ENCODE measurements at regions of chr22 and their contacts with region 1.

Region 1: DNA sequence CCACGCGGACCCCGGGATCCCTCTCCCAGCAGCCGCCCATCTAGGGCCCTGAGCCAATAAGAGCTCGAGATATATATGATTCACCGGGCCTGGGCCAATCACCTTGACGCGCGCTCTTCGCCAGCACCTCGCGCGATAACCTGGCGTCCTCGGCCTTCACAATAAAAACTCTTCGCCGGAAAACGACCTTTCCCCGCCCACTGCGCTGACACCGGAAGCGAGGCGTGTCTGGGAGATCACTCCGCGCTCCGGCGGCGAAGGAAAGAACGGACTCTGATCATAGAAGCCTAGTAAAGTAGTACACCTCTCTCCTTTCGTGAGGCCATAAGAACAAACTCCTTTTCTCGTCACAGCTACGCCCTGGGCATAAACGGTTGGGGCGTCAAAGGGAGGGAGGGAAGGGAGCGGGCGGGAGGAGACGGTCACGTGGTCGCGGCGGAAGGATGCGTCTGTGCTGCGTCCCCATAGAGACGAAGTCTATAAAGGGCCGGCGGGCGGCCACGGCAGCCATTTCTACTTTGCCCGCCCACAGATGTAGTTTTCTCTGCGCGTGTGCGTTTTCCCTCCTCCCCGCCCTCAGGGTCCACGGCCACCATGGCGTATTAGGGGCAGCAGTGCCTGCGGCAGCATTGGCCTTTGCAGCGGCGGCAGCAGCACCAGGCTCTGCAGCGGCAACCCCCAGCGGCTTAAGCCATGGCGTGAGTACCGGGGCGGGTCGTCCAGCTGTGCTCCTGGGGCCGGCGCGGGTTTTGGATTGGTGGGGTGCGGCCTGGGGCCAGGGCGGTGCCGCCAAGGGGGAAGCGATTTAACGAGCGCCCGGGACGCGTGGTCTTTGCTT is at the start of gene ATF4:
- DNase-seq: peak; percentile 98
- ATAC-seq: peak; percentile 89
- H3K4me3 Mint-ChIP-seq: peak within 1 kb of the TSS; percentile 90
- H3K27ac Mint-ChIP-seq: peak within 1 kb of the TSS; percentile 98
- H3K4me1 Mint-ChIP-seq: peaks cover 61% of the 10 kb centered on the region
- H3K27me3 Mint-ChIP-seq: no peaks in the 10 kb centered on the region
- total RNA-seq, gene ATF4: 412 to 426 TPM

Region 2: DNA sequence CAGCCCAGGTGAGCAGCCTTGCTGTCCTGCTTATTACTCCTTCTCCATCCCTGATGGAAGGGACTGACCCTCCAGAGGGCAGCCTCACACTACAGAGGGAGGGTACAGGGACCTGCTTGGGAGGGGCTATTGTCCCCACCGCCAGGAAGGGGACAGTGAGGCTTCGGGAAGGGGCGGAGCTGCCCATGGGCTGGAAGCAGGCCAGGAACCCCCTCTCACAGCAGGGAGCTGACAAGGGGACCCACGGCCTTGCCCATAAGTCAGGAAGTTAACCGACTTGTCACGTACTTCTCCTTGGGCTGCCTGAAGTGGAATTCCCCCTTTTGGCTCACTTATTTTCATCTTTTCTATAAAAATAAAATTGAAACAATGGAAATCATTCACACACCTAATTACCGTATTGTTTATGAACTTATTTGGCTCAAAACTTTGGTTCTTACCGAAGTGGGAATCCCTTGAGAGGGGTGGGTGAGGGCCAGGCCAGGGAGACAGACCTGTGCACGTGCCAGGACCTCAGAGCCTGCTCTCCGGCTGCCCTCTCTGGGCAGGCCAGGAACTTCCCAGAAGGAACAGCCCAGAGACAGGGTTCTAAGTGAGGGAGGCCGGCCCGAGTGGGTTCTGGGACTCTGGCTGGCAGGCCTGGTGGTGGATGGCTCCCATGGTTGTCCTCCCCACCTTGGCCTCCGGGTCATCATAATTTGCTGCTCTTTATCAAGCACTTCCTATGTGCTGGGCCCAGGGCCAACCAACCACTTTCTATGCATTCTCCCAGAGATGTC is 57.6 kb before region 1 on chr22:
- CTCF ChIA-PET with region 1: no interaction called
- POLR2A ChIA-PET with region 1: no interaction called
- DNase-seq: no peak
- ATAC-seq: no peak
- H3K4me3 Mint-ChIP-seq: no peak overlapping the region
- H3K27ac Mint-ChIP-seq: peak overlapping the region; percentile 46
- H3K4me1 Mint-ChIP-seq: peaks cover 13% of the 10 kb centered on the region
- H3K27me3 Mint-ChIP-seq: peaks cover 14% of the 10 kb centered on the region

Region 3: DNA sequence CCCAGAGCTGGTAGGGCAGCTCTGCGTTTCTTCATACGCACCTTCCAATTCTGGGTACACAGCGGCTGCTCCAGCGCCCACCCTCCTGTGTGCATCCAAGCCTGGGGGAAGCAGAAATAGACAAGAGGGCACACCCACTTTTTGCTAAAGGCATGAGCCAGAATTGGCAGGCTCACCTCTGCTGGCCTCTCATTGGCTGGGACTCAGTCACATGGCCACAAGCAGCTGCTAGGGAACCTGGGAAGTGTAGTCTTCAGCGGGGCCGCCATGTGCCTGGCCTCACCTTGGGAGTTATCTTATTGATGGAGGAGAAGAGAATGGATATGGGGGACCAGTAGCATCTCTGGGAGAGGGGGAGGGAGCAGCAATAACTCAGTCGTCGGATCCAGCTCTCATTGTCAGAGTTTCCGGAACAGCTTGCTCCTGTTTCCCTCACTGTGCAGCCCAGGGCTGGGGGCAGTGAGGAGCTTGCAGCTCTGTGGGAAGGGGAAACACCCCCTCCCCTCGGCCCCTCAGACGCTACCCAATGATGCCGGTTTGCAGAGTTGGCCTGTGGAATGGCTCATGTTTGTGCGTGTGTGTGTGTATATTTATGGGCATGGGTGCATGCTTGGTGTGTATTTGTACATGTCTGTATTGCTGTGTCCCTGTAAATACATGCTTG is 30.0 kb before region 1 on chr22:
- CTCF ChIA-PET with region 1: interaction called, 264 read pairs
- POLR2A ChIA-PET with region 1: interaction called, 13 read pairs
- DNase-seq: peak; percentile 89
- ATAC-seq: peak; percentile 99
- H3K4me3 Mint-ChIP-seq: peak overlapping the region; percentile 37
- H3K27ac Mint-ChIP-seq: peak overlapping the region; percentile 33
- H3K4me1 Mint-ChIP-seq: peaks cover 39% of the 10 kb centered on the region
- H3K27me3 Mint-ChIP-seq: no peaks in the 10 kb centered on the region

Region 4: DNA sequence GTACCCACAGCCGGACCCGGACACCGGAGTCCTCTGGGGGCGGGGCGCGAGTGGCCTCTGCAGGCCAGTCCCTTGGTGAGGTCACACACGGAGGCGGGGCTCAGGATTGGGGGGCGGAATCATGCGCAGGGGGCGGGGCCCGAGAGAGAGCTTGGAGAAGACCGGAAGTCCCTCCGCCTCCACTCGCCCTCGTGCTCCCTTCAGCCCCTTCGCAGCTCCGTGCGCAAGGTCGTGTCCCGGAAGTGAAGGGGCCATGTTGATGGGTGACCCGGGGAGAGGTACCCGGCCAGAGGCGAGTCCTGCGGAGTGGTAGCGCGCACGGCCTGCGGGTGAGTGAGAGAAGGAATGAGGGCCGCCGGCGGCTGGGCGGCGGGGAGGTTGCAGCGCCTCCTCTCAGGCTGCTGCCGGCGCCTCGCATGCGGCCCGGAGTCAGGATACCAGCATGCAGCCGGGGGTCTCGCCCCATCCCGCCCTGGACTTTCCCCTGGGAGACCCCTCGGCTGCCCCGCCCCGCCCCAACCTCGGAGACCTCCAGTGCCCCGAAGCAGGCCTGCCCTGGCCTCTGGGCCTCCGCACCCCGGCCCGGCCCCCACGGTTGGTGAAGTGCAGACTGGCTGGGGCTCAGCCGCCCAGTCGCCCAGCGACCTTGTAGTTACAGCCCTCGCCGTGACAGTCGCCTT is 18.0 kb before region 1 on chr22 and contains the start of gene MIEF1:
- CTCF ChIA-PET with region 1: interaction called, 264 read pairs
- POLR2A ChIA-PET with region 1: interaction called, 43 read pairs
- DNase-seq: peak; percentile 95
- ATAC-seq: peak; percentile 98
- H3K4me3 Mint-ChIP-seq: peak within 1 kb of the TSS; percentile 98
- H3K27ac Mint-ChIP-seq: peak within 1 kb of the TSS; percentile 97
- H3K4me1 Mint-ChIP-seq: peaks cover 41% of the 10 kb centered on the region
- H3K27me3 Mint-ChIP-seq: peaks cover 6% of the 10 kb centered on the region
- total RNA-seq, gene MIEF1: 37.9 to 38.2 TPM

Region 5: GRCh38 chr22:39508393-39508792 is 11.9 kb before region 1 on chr22:
- CTCF ChIA-PET with region 1: interaction called, 27 read pairs
- POLR2A ChIA-PET with region 1: interaction called, 43 read pairs
- DNase-seq: no peak
- ATAC-seq: no peak
- H3K4me3 Mint-ChIP-seq: no peak overlapping the region
- H3K27ac Mint-ChIP-seq: no peak overlapping the region
- H3K4me1 Mint-ChIP-seq: peaks cover 34% of the 10 kb centered on the region
- H3K27me3 Mint-ChIP-seq: no peaks in the 10 kb centered on the region

Region 6: GRCh38 chr22:39839917-39840510 is 319.7 kb after region 1 on chr22:
- CTCF ChIA-PET with region 1: no interaction called
- POLR2A ChIA-PET with region 1: no interaction called
- DNase-seq: peak; percentile 47
- ATAC-seq: peak; percentile 89
- H3K4me3 Mint-ChIP-seq: no peak overlapping the region
- H3K27ac Mint-ChIP-seq: no peak overlapping the region
- H3K4me1 Mint-ChIP-seq: peaks cover 15% of the 10 kb centered on the region
- H3K27me3 Mint-ChIP-seq: peaks cover 12% of the 10 kb centered on the region